Activated CD8-positive, alpha-beta memory T cell treated with anti-CD3 and anti-CD28 coated beads, Interleukin-2, amount 10 ng/mL, durations not matched to agents 7 days and 5 days (primary cell): ENCODE measurements at regions of chr15 and their contacts with region 1.

Region 1: GRCh38 chr15:60520825-60521368 is 42.0 kb upstream of the ICE2 start:
- DNase-seq: peak; percentile 88
- ATAC-seq: peak; percentile 78
- H3K4me3 Mint-ChIP-seq: peak overlapping the region; percentile 2
- H3K27ac Mint-ChIP-seq: peak overlapping the region; percentile 75
- H3K4me1 Mint-ChIP-seq: peaks cover 60% of the 10 kb centered on the region
- H3K27me3 Mint-ChIP-seq: no peaks in the 10 kb centered on the region

Region 2: DNA sequence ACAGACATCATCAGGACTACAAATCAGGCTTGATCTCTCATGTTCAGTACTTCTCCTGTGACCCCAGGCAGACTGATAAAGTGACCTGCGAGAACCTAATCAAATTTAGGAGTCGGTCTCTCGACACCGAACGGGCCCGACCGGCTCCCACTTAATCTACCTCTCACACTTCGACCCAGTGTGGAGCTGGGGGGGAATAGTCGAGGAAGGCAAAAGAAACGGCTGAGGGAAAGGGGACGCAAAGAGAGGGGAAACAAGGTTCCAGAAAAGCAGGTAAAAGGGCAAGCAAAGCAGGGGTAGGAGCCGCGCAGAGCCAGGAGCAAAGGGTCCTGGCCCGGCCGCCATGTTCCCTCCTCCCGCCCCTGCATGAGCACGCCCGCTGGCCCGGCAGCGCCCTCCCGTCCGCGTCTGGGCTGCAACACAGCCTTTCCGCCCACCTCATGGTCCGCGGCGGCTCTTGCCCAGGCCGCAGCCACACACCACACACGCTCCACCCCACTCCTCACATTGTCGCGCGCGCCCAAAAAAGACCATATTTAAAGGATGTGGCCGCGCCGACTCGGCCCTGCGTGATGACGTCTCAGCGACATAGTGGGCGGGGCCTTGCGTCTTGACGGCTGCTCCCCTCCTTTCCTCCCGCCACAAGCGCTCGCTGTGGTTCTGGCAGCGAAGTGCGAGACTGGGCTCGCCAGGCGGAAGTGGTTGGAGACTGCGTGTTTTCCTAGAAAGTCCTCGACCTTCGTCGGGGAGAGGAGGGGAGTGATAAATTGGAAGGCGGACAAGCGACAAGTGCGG is 42.1 kb before region 1 on chr15 and contains the start of gene ICE2:
- CTCF ChIA-PET with region 1: interaction called, 10 read pairs
- DNase-seq: peak; percentile 99
- ATAC-seq: peak; percentile 85
- H3K4me3 Mint-ChIP-seq: peak within 1 kb of the TSS; percentile 98
- H3K27ac Mint-ChIP-seq: peak within 1 kb of the TSS; percentile 99
- H3K4me1 Mint-ChIP-seq: peaks cover 54% of the 10 kb centered on the region
- H3K27me3 Mint-ChIP-seq: no peaks in the 10 kb centered on the region
- total RNA-seq, gene ICE2: 54.6 to 74.2 TPM

Region 3: DNA sequence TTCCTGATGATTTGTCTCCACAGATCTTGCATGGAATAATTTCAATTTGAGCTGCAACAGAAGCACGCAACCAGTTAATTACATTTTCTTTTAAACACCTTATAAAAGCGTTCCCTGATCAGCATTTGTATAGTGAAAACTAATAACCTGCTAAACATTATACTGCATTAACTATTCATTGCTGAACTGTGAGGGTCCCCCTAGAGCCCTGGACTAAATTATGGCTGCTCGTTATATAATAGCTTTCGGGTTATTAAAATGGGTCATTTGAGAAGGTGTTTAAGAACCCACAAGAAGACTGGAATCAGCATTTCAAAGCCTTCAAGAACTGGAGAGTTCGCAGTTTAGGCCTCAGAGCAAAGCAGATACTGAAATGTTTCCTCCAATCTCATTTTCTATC is 10.9 kb after region 1 on chr15:
- CTCF ChIA-PET with region 1: interaction called, 28 read pairs
- DNase-seq: no peak
- ATAC-seq: no peak
- H3K4me3 Mint-ChIP-seq: no peak overlapping the region
- H3K27ac Mint-ChIP-seq: no peak overlapping the region
- H3K4me1 Mint-ChIP-seq: peaks cover 62% of the 10 kb centered on the region
- H3K27me3 Mint-ChIP-seq: no peaks in the 10 kb centered on the region

Region 4: GRCh38 chr15:60548101-60548500 is 27.2 kb after region 1 on chr15:
- CTCF ChIA-PET with region 1: interaction called, 49 read pairs
- DNase-seq: peak; percentile 75
- ATAC-seq: peak; percentile 63
- H3K4me3 Mint-ChIP-seq: peak overlapping the region; percentile 70
- H3K27ac Mint-ChIP-seq: peak overlapping the region; percentile 96
- H3K4me1 Mint-ChIP-seq: peaks cover 96% of the 10 kb centered on the region
- H3K27me3 Mint-ChIP-seq: no peaks in the 10 kb centered on the region

Region 5: GRCh38 chr15:60580650-60581376 is 59.9 kb after region 1 on chr15:
- CTCF ChIA-PET with region 1: interaction called, 28 read pairs
- DNase-seq: peak; percentile 58
- ATAC-seq: peak; percentile 52
- H3K4me3 Mint-ChIP-seq: peak overlapping the region; percentile 68
- H3K27ac Mint-ChIP-seq: peak overlapping the region; percentile 89
- H3K4me1 Mint-ChIP-seq: peaks cover 87% of the 10 kb centered on the region
- H3K27me3 Mint-ChIP-seq: no peaks in the 10 kb centered on the region

Region 6: GRCh38 chr15:60673918-60674558 is 153.1 kb after region 1 on chr15:
- CTCF ChIA-PET with region 1: no interaction called
- DNase-seq: no peak
- ATAC-seq: no peak
- H3K4me3 Mint-ChIP-seq: no peak overlapping the region
- H3K27ac Mint-ChIP-seq: no peak overlapping the region
- H3K4me1 Mint-ChIP-seq: peaks cover 3% of the 10 kb centered on the region
- H3K27me3 Mint-ChIP-seq: peaks cover 9% of the 10 kb centered on the region